Right ventricle myocardium superior (tissue), 1 donor: ENCODE measurements at regions of chr5 and their contacts with region 1.

Region 1: DNA sequence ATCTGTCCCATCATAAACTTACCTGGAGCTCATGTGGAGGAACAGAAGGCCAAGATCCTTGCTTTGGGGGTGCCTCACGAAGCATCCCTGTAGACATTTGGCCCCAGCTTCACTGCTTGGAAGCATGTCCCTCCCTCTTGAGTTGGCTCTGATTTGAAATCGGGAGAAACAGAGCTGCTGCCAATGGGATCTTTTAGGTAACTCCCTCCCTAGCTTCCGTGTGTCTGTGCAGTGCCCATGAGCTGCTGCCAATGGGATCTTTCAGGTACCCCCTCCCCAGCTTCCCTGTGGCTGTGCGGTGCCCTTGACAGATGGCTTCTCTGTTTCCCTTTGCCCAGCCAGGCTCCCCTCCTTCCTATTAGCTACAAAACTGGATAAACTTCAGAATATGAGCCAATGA is 178.0 kb downstream of the NR3C1 start:
- DNase-seq: no peak
- ATAC-seq: no peak

Region 2: GRCh38 chr5:143148771-143149170 is 76.7 kb before region 1 on chr5:
- intact Hi-C with region 1: loop called (anchors 2 kb)
- DNase-seq: no peak
- ATAC-seq: no peak